IMR-90 (cell line): ENCODE measurements at regions of chr9 and their contacts with region 1.

Region 1: GRCh38 chr9:98775831-98776441 is 20.4 kb downstream of the ANKS6 start:
- DNase-seq: peak; percentile 79
- ATAC-seq: peak; percentile 79
- H3K4me3 ChIP-seq: no peak overlapping the region
- H3K27ac ChIP-seq: no peak overlapping the region
- H3K4me1 ChIP-seq: 0 out of 2 replicates have a peak, but pooled peaks cover 1% of the 10 kb centered on the region
- H3K27me3 ChIP-seq: no peaks in the 10 kb centered on the region
- CTCF ChIP-seq: peak; percentile 86
- POLR2A ChIP-seq: no peak
- RAD21 ChIP-seq: peak; percentile 90

Region 2: GRCh38 chr9:98724810-98725530 is 51.0 kb before region 1 on chr9:
- CTCF ChIA-PET with region 1: interaction called, 10 read pairs
- POLR2A ChIA-PET with region 1: no interaction called
- dilution Hi-C with region 1: no loop called
- in situ Hi-C with region 1: no loop called
- intact Hi-C with region 1: no loop called
- DNase-seq: no peak
- ATAC-seq: no peak
- H3K4me3 ChIP-seq: no peak overlapping the region
- H3K27ac ChIP-seq: no peak overlapping the region
- H3K4me1 ChIP-seq: peaks cover 7% of the 10 kb centered on the region; the same call in 1 of the 2 replicates
- H3K27me3 ChIP-seq: peaks cover 13% of the 10 kb centered on the region
- CTCF ChIP-seq: no peak
- POLR2A ChIP-seq: no peak
- RAD21 ChIP-seq: no peak